Gastrocnemius medialis (tissue), 4 donors: ENCODE measurements at regions of chr2 and their contacts with region 1.

Region 1: GRCh38 chr2:172555522-172556283 is at the start of gene PDK1:
- DNase-seq: peak; percentile 83 to 85
- ATAC-seq: peak; percentile 88 to 89
- H3K4me3 ChIP-seq: peak within 1 kb of the TSS; percentile 72 to 95 (median 78)
- H3K27ac ChIP-seq: peak within 1 kb of the TSS; percentile 88 to 98 (median 94)
- H3K4me1 ChIP-seq: peaks cover 8 to 17% of the 10 kb centered on the region in 2 donors
- H3K27me3 ChIP-seq: no peaks in the 10 kb centered on the region
- CTCF ChIP-seq: no peak
- POLR2A ChIP-seq: peak; percentile 86 to 91
- total RNA-seq, gene PDK1: 5.8 to 23.8 (median 14.0) TPM

Region 2: GRCh38 chr2:171687287-171688128 is 868.2 kb before region 1 on chr2 and contains the start of gene DYNC1I2:
- in situ Hi-C with region 1: no loop called
- intact Hi-C with region 1: loop called (anchors 5 kb)
- DNase-seq: peak; percentile 87 to 89
- ATAC-seq: peak; percentile 99 to 100
- H3K4me3 ChIP-seq: peak within 1 kb of the TSS; percentile 85 to 95 (median 92)
- H3K27ac ChIP-seq: peak within 1 kb of the TSS; percentile 81 to 93 (median 88)
- H3K4me1 ChIP-seq: peaks cover 13 to 16% of the 10 kb centered on the region in 2 donors
- H3K27me3 ChIP-seq: no peaks in the 10 kb centered on the region
- CTCF ChIP-seq: peak in 1 of 5 experiments; percentile 41
- POLR2A ChIP-seq: peak; percentile 17 to 26
- total RNA-seq, gene DYNC1I2: 40.0 to 93.7 (median 59.3) TPM

Region 3: GRCh38 chr2:171922230-171923022 is 633.3 kb before region 1 on chr2 and contains the start of gene HAT1:
- in situ Hi-C with region 1: loop called in 1 of 4 experiments (anchors 25 kb)
- intact Hi-C with region 1: loop called (anchors 2 kb)
- DNase-seq: peak; percentile 96
- ATAC-seq: peak; percentile 97 to 98
- H3K4me3 ChIP-seq: peak within 1 kb of the TSS; percentile 84 to 94 (median 86)
- H3K27ac ChIP-seq: peak within 1 kb of the TSS; percentile 92 to 94 (median 93)
- H3K4me1 ChIP-seq: peaks cover 23 to 24% of the 10 kb centered on the region in 2 donors
- H3K27me3 ChIP-seq: no peaks in the 10 kb centered on the region
- CTCF ChIP-seq: no peak
- POLR2A ChIP-seq: peak; percentile 61 to 78
- total RNA-seq, gene HAT1: 30.6 to 61.9 (median 50.0) TPM

Region 4: GRCh38 chr2:172350839-172351479 is 204.7 kb before region 1 on chr2:
- in situ Hi-C with region 1: no loop called
- intact Hi-C with region 1: loop called (anchors 1 kb)
- DNase-seq: peak; percentile 89 to 94
- ATAC-seq: peak; percentile 99
- H3K4me3 ChIP-seq: no peak overlapping the region
- H3K27ac ChIP-seq: peak overlapping the region; percentile 75 to 87 (median 76)
- H3K4me1 ChIP-seq: peaks cover 11 to 24% of the 10 kb centered on the region in 2 donors
- H3K27me3 ChIP-seq: no peaks in the 10 kb centered on the region
- CTCF ChIP-seq: no peak
- POLR2A ChIP-seq: no peak

Region 5: GRCh38 chr2:172397148-172397834 is 158.4 kb before region 1 on chr2:
- in situ Hi-C with region 1: no loop called
- intact Hi-C with region 1: no loop called
- DNase-seq: no peak
- ATAC-seq: peak in 1 of 2 donors; percentile 24
- H3K4me3 ChIP-seq: no peak overlapping the region
- H3K27ac ChIP-seq: peak overlapping the region in 2 of 4 donors; percentile 13 to 46
- H3K4me1 ChIP-seq: peaks cover 0 to 39% of the 10 kb centered on the region in 2 donors
- H3K27me3 ChIP-seq: no peaks in the 10 kb centered on the region
- CTCF ChIP-seq: no peak
- POLR2A ChIP-seq: no peak